ENCODE measurements at regions of chr2 and their contacts with region 1.

Region 1: DNA sequence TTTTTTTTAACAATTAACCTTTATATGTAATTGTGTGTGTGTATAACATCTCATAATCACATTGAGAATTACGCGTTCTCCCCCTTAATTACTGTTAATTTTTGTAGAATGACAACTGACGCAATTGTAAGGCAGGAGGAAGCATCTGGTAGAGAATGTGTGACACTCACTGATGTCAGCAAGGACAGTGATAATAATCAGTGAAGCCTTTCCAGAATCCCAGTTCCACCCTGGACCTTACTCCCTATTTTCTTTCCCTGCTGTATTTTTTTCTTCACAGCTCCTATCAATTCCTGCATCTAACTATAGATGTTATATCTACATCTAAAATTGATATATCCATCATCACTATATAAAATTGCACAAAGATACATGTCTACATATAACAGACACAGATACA is 16.1 kb upstream of the STRN start:
- DNase-seq: no peak
- H3K4me3 ChIP-seq: no peak overlapping the region
- CTCF ChIP-seq: no peak
- POLR2A ChIP-seq: no peak

Region 2: GRCh38 chr2:35858216-35858615 is 1124.3 kb before region 1 on chr2:
- intact Hi-C with region 1: no loop called
- DNase-seq: no peak
- H3K4me3 ChIP-seq: no peak overlapping the region
- CTCF ChIP-seq: no peak
- POLR2A ChIP-seq: no peak

Region 3: DNA sequence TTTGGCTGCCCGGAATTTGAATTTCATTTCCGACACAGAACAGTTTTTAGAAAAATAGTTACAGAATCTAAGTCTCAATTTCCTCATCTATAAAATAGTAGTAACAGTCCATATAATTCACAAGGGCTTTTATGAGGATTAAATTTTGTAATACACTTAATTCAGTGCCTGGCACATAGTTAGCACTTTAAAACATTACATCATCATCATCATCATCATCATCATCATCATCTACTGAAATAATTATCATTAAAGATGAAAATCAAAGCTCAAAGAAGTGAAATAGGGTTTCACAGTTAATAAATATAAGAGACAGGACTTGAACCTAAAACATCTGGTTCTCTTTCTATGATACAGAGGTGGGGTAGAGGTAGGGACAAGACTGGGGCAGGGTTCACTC is 88.5 kb after region 1 on chr2:
- intact Hi-C with region 1: loop called (anchors 10 kb)
- DNase-seq: no peak
- H3K4me3 ChIP-seq: no peak overlapping the region
- CTCF ChIP-seq: no peak
- POLR2A ChIP-seq: no peak

Measured in lower leg skin (tissue), 4 donors.